ENCODE measurements at regions of chr1 and their contacts with region 1.

Region 1: DNA sequence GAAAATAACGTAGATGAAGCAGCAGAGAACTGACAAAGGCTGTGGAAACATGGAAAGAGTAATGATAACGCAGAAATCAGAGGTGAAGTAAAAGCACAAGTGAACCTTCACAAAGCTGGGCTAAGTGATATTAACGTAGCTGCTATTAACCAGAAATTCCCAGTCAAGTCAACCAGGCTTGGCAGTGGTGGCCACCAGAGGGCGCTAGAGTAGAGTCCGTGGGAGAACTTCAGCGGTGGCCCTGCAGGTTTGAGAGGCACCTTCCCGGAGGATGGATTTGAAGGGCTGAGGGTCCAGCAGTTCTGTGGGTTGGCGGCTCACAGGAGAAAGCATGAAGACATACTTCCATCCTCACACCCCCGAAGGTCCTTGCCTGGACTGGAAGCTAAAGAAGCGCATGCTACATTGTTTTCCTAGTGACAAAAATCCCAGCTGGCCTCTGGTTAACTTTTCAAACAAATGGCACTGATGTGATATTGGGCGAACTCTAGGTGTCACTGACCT is 81.7 kb upstream of the ZNF648 start:
- DNase-seq: peak; percentile 89 to 95 (median 91)
- ATAC-seq: peak; percentile 58 to 86 (median 74)
- H3K4me3 ChIP-seq: no peak overlapping the region
- H3K27ac ChIP-seq: peak overlapping the region; percentile 69 to 97 (median 84)
- H3K4me1 ChIP-seq: peaks cover 7 to 53% (median 21%) of the 10 kb centered on the region in 12 donors
- H3K27me3 ChIP-seq: peaks cover 0 to 5% (median 0%) of the 10 kb centered on the region in 9 donors
- CTCF ChIP-seq: peak; percentile 87 to 98 (median 96)
- POLR2A ChIP-seq: no peak

Region 2: DNA sequence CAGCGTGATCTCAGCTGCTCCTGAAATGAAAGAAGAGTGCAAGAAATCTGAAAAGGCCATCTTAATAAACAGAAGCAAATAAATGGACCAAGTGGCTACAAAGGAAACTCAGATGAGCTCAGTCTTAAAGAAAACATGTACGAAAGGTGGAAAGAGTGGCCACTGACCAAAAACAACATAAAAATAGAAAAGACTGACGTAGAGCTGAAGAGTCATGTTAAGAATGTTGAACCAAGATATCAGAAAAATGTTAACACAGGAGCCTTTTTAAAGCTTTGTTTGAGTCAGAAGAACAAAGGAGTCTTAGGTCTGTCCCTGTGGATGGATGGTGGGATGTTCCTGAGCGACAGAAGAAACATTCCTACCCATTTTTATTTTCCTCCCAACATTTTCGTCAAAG is 50.9 kb before region 1 on chr1:
- intact Hi-C with region 1: loop called in 7 of 10 experiments (anchors 5 kb)
- DNase-seq: no peak
- ATAC-seq: peak in 1 of 4 donors; percentile 37
- H3K4me3 ChIP-seq: no peak overlapping the region
- H3K27ac ChIP-seq: no peak overlapping the region
- H3K4me1 ChIP-seq: peaks cover 0 to 5% (median 0%) of the 10 kb centered on the region in 12 donors
- H3K27me3 ChIP-seq: no peaks in the 10 kb centered on the region
- CTCF ChIP-seq: no peak
- POLR2A ChIP-seq: no peak

Region 3: GRCh38 chr1:182198049-182198501 is 54.9 kb after region 1 on chr1:
- intact Hi-C with region 1: loop called in 3 of 10 experiments (anchors 2 to 5 kb)
- DNase-seq: no peak
- ATAC-seq: no peak
- H3K4me3 ChIP-seq: no peak overlapping the region
- H3K27ac ChIP-seq: peak overlapping the region in 4 of 12 donors; percentile 30 to 58 (median 48)
- H3K4me1 ChIP-seq: peaks cover 0 to 21% (median 8%) of the 10 kb centered on the region in 12 donors
- H3K27me3 ChIP-seq: no peaks in the 10 kb centered on the region
- CTCF ChIP-seq: peak in 5 of 12 donors; percentile 10 to 41 (median 23)
- POLR2A ChIP-seq: no peak

Region 4: GRCh38 chr1:182279724-182280503 is 136.7 kb after region 1 on chr1:
- intact Hi-C with region 1: no loop called
- DNase-seq: peak in 1 of 5 donors; percentile 59
- ATAC-seq: peak in 3 of 4 donors; percentile 39 to 68 (median 62)
- H3K4me3 ChIP-seq: no peak overlapping the region
- H3K27ac ChIP-seq: peak overlapping the region in 2 of 12 donors; percentile 13 to 25
- H3K4me1 ChIP-seq: peaks cover 0 to 12% (median 2%) of the 10 kb centered on the region in 12 donors
- H3K27me3 ChIP-seq: no peaks in the 10 kb centered on the region
- CTCF ChIP-seq: no peak
- POLR2A ChIP-seq: no peak

Region 5: DNA sequence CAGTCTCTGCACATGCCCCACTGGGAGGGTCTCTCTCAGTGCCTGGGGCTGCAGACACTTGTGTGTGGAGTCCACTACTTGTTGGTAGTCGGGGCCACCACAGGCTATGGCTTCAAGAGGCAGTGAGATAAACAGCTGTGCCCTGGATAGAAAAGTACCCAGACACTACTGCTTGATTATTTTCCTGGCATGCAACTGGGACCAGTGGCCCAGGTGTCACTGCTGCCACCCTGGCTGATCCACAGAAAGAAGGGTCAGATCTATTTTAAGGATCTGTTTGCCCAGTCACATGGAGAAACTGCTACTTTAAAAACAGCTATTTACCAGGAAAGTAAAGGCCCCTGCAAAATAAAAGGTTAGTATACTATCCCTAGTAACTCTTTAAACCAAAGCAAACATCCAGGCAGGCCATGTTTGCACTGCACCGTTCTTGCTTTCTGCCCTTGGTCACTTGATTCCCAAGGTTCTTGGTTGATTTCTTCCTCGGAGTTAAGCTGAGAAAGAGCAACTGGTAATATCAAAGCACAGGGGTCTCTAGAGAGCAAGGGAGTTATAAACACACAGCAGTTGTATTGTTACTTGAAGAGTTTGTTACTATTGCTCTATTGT is 148.5 kb after region 1 on chr1:
- intact Hi-C with region 1: loop called in 5 of 10 experiments (anchors 5 to 10 kb)
- DNase-seq: peak in 2 of 5 donors; percentile 34 to 41
- ATAC-seq: peak; percentile 29 to 69 (median 56)
- H3K4me3 ChIP-seq: no peak overlapping the region
- H3K27ac ChIP-seq: peak overlapping the region in 6 of 12 donors; percentile 11 to 81 (median 25)
- H3K4me1 ChIP-seq: peaks cover 0 to 31% (median 16%) of the 10 kb centered on the region in 12 donors
- H3K27me3 ChIP-seq: no peaks in the 10 kb centered on the region
- CTCF ChIP-seq: no peak
- POLR2A ChIP-seq: no peak

Region 6: DNA sequence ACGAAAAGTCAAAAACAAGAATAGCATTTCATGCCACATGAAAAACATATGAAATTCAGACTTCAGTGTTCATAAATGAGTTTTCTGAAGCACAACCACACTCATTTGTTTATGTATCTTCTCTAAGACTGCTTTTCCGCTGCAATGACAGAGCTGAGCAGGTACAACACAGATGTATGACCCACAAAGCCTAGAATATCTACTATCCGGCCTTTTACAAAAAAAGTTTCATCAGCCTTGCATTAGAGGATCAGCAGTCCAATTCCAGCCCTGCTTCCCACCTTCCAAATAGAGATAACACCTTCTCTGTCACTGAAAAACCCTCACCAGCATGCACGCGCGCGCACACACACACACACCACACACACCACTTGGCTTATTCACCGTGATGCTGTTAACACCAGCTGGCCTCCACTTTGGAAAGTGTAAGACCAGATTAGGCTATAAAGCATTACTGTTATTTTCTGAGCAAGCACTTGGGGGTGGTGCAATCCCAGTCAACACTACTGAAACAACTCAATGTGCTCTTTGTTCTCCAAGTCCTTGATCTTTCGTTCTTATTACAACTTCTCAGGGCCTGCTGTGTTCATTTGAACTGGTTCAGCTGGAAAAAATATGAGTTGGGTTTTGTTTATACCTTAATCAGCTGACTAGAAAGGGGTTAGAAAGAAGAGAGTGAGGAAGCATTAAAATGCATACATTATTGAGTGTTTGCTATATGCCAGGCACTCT is 158.4 kb after region 1 on chr1:
- intact Hi-C with region 1: loop called in 5 of 10 experiments (anchors 5 to 10 kb)
- DNase-seq: peak in 4 of 5 donors; percentile 30 to 77 (median 32)
- ATAC-seq: peak; percentile 57 to 92 (median 86)
- H3K4me3 ChIP-seq: no peak overlapping the region
- H3K27ac ChIP-seq: peak overlapping the region in 7 of 12 donors; percentile 23 to 64 (median 46)
- H3K4me1 ChIP-seq: peaks cover 0 to 29% (median 6%) of the 10 kb centered on the region in 12 donors
- H3K27me3 ChIP-seq: no peaks in the 10 kb centered on the region
- CTCF ChIP-seq: peak in 3 of 12 donors; percentile 25 to 37 (median 28)
- POLR2A ChIP-seq: no peak

Region 7: DNA sequence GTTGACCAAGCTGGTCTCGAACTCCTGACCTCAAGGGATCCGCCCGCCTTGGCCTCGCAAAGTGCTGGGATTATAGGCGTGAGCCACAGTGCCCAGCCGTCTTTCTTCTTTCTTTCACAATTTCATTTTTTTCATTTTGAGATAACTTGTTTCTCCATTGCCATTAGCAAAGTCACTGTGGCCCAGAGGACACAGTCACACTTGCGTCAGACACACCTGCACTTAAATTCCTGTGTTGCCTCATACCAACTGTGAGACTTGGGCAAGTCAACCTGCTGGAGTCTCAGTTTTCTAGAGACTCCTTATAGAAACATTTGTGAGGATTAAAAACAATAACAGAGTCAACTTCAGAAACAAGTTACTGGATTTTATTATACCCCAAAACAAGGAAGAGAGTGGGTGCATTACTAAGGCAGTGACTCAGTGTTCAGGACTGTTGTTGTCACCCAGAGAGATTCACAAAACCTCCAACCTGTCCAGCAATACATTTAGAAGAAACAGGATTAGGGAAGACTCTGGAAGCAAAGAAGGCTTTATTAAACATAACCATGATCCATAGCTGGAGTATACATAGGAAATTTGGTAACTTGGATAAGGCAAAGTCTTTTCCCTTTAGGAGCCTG is 254.7 kb after region 1 on chr1:
- intact Hi-C with region 1: loop called (anchors 1 to 2 kb)
- DNase-seq: no peak
- ATAC-seq: no peak
- H3K4me3 ChIP-seq: no peak overlapping the region
- H3K27ac ChIP-seq: no peak overlapping the region
- H3K4me1 ChIP-seq: peaks cover 0 to 38% (median 11%) of the 10 kb centered on the region in 12 donors
- H3K27me3 ChIP-seq: no peaks in the 10 kb centered on the region
- CTCF ChIP-seq: no peak
- POLR2A ChIP-seq: no peak

Measured in heart left ventricle (tissue), 16 donors.